MCF 10A (cell line): ENCODE measurements at regions of chr17 and their contacts with region 1.

Region 1: GRCh38 chr17:50161023-50161910 is 4.5 kb upstream of the SGCA start:
- DNase-seq: peak; percentile 89
- H3K4me3 Mint-ChIP-seq: peak overlapping the region; percentile 71
- H3K27ac Mint-ChIP-seq: no peak overlapping the region
- H3K4me1 Mint-ChIP-seq: peaks cover 11% of the 10 kb centered on the region
- H3K27me3 Mint-ChIP-seq: no peaks in the 10 kb centered on the region
- CTCF ChIP-seq: peak; percentile 84

Region 2: GRCh38 chr17:50015146-50015545 is 146.1 kb before region 1 on chr17:
- CTCF ChIA-PET with region 1: no interaction called
- POLR2A ChIA-PET with region 1: no interaction called
- intact Hi-C with region 1: no loop called
- DNase-seq: no peak
- H3K4me3 Mint-ChIP-seq: no peak overlapping the region
- H3K27ac Mint-ChIP-seq: no peak overlapping the region
- H3K4me1 Mint-ChIP-seq: no peaks in the 10 kb centered on the region
- H3K27me3 Mint-ChIP-seq: no peaks in the 10 kb centered on the region
- CTCF ChIP-seq: no peak

Region 3: GRCh38 chr17:50114849-50115357 is 46.4 kb before region 1 on chr17:
- CTCF ChIA-PET with region 1: interaction called, 15 read pairs
- POLR2A ChIA-PET with region 1: no interaction called
- intact Hi-C with region 1: loop called (anchors 1 kb)
- DNase-seq: peak; percentile 68
- H3K4me3 Mint-ChIP-seq: no peak overlapping the region
- H3K27ac Mint-ChIP-seq: no peak overlapping the region
- H3K4me1 Mint-ChIP-seq: no peaks in the 10 kb centered on the region
- H3K27me3 Mint-ChIP-seq: peaks cover 22% of the 10 kb centered on the region
- CTCF ChIP-seq: peak; percentile 46

Region 4: DNA sequence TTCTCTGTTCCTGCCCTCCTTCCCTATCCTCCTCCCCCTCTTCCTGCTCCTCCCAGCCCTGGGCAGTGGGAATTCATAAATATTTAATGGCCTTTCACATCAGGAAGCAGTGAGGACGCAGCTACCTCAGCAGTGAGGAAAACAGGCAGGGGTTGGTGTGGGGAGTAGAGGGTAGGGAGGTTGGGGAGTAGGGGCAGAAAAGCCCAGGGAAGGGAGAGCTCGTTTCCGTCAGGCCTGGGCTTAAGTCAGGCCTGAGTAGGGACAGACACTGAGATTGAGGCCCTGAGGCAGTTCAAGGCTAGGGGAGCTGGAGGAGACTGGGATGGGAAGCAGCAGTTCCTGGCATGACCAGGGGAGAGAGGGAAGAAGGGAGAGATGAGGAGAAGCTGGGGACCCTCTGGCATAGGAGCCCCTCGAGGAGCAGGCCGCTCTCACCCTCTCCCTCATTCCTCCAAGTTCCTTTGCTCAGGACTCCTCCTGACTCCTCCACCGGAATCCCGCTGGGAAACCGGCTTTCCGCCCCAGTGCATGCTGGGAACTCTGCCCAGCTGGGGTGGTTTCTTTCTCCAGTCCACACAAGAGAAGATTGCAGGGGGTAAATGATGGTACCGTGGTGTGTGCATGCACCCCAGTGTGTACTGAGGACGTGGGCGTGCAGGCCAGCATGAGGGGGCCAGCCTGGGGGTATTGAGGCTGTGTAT is 37.5 kb before region 1 on chr17:
- CTCF ChIA-PET with region 1: interaction called, 10 read pairs
- POLR2A ChIA-PET with region 1: no interaction called
- intact Hi-C with region 1: no loop called
- DNase-seq: no peak
- H3K4me3 Mint-ChIP-seq: no peak overlapping the region
- H3K27ac Mint-ChIP-seq: peak overlapping the region; percentile 63
- H3K4me1 Mint-ChIP-seq: peaks cover 11% of the 10 kb centered on the region
- H3K27me3 Mint-ChIP-seq: peaks cover 46% of the 10 kb centered on the region
- CTCF ChIP-seq: no peak

Region 5: DNA sequence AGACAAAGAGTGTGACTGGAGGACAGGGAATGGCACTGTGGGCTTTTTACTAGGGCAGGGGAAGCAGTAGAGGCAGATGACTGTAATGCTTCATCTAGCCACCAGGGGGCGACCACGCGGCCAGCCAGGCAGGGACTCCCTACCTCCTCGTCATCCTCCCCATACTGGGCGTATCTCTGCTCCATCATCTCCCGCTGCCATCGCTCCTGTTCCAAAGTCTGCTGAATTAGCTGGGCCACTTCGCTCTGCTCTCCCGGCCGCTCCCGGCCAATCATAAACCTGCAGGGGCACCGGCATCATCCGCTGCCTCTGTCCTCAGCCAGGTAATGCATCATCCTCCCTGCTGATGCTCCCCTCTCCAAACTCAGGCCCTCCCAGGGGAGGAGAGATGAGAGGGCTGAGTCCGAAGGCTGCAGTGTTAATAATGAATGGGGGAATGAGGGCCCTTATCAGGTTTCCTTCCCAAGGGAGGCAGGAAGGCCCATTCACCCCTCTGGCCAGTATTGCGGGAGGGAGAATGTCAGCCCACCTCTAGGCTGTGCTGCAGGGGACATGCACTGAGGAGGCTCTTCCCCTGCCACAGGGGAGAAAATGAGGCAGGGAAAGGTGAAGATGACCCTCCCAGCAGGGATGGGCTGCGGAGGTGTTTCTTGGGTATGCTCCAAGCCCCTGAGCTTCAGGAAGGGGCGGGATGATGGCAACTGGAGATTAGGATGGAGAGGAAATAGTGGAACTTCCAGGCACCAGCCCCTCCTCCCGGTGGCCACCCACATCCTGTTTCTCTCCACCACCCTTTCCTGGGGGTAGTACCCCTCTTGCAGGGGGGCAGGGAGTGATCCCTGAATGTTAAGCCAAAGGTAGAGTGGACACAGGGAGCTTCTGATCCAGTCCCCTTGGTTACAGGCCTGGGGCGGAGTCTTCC is 21.1 kb before region 1 on chr17:
- CTCF ChIA-PET with region 1: interaction called, 16 read pairs
- POLR2A ChIA-PET with region 1: interaction called, 5 read pairs
- intact Hi-C with region 1: loop called (anchors 1 kb)
- DNase-seq: peak; percentile 73
- H3K4me3 Mint-ChIP-seq: no peak overlapping the region
- H3K27ac Mint-ChIP-seq: no peak overlapping the region
- H3K4me1 Mint-ChIP-seq: peaks cover 13% of the 10 kb centered on the region
- H3K27me3 Mint-ChIP-seq: no peaks in the 10 kb centered on the region
- CTCF ChIP-seq: peak; percentile 91

Region 6: DNA sequence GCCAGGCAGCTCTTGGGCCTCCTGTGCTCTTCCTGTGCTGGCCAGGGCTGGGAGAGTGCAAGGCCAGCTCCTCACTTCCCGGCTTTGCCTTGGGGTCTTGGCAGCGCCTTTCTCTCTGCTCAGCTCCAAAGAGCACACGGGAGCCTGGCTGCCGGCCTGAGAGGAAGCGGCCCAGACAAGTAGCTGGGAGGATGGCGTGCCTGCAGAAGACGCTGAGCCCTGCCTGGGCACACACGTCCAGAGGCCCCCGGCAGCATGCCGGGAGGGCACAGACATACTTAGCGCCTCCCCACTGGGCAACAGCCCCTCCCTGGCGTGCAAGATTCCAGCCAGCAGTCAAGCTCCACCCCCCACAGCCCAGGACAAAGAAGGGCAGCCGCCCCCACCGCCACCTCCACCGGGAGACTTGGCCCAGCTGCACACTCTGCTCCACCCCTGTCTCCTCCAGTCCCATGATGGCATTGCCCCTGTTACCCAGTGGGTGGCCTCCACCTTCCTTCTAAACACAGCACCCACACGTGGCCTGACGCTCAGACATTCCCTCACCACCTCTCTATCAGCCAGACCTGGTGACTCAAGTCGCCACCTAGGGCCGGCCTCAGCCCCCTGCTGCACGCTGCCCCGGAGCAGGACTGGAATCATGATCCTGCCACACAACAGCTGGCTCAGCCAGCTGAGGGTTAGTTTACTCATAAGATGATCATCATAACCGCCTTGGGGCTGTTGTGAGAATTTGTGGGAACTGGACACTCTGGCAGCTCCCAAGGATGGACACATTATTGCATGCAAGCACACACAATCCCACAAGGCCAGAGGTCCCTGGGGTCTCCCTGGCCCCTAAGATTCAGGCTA is 16.9 kb after region 1 on chr17:
- CTCF ChIA-PET with region 1: interaction called, 22 read pairs
- POLR2A ChIA-PET with region 1: interaction called, 4 read pairs
- intact Hi-C with region 1: no loop called
- DNase-seq: peak; percentile 98
- H3K4me3 Mint-ChIP-seq: peak overlapping the region; percentile 15
- H3K27ac Mint-ChIP-seq: peak overlapping the region; percentile 52
- H3K4me1 Mint-ChIP-seq: peaks cover 42% of the 10 kb centered on the region
- H3K27me3 Mint-ChIP-seq: no peaks in the 10 kb centered on the region
- CTCF ChIP-seq: peak; percentile 33

Region 7: DNA sequence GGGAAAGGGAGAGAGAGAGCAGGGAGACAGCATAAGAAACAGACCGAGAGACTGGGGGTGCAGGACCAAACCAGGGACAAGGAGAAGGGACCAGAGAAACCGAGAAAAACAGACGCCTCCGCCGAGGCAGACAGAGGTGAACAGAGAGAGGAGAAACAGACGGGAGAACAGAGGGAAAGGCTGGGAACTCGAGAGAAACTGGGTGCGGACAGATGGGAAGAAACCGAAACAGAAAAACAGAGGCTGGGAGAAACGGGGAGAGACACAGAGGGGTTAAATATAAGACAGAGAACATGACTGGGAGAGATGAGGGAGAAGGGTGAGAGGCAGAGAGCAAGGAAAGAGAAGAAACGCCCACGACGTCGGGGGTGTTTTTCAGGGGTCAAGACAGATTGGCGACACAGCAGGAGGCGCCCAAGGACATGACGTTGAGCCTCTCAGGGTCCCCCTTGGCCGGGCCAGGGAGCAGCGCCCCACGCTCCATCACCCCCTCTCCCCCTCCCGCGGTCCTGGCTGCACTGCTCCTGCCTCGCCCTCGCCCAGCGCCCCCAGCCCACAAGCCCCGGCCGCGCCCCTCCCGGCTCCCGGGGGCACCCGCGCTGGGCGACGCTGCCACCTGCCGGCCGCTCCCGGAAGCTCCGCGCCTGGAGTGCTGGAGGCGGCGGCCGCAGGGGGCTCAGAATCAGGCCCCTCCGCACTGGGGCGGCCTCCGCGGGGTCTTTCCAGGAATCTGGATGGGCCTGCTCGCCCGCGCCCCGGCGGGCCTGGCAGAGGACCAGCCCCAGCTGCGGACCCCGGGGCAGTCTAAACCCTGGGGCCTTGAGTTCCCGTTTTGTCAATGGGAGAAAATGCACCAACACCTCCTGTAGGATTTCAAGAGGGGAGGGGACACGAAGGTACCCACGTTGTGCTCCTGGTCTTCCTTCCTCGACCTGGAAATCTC is 111.7 kb after region 1 on chr17:
- CTCF ChIA-PET with region 1: no interaction called
- POLR2A ChIA-PET with region 1: no interaction called
- intact Hi-C with region 1: no loop called
- DNase-seq: peak; percentile 41
- H3K4me3 Mint-ChIP-seq: peak overlapping the region; percentile 84
- H3K27ac Mint-ChIP-seq: peak overlapping the region; percentile 77
- H3K4me1 Mint-ChIP-seq: peaks cover 27% of the 10 kb centered on the region
- H3K27me3 Mint-ChIP-seq: no peaks in the 10 kb centered on the region
- CTCF ChIP-seq: peak; percentile 86